Activated B cell treated with CpG ODN at 0.5 μM for 24 hours (primary cell): ENCODE measurements at regions of chr16 and their contacts with region 1.

Region 1: GRCh38 chr16:87636072-87636684 is 33.9 kb downstream of the JPH3 start:
- DNase-seq: peak; percentile 69
- ATAC-seq: peak; percentile 90
- H3K4me3 Mint-ChIP-seq: peak overlapping the region; percentile 84
- H3K27ac Mint-ChIP-seq: peak overlapping the region; percentile 69
- H3K4me1 Mint-ChIP-seq: peaks cover 24% of the 10 kb centered on the region
- H3K27me3 Mint-ChIP-seq: peaks cover 19% of the 10 kb centered on the region
- CTCF ChIP-seq: peak; percentile 4

Region 2: DNA sequence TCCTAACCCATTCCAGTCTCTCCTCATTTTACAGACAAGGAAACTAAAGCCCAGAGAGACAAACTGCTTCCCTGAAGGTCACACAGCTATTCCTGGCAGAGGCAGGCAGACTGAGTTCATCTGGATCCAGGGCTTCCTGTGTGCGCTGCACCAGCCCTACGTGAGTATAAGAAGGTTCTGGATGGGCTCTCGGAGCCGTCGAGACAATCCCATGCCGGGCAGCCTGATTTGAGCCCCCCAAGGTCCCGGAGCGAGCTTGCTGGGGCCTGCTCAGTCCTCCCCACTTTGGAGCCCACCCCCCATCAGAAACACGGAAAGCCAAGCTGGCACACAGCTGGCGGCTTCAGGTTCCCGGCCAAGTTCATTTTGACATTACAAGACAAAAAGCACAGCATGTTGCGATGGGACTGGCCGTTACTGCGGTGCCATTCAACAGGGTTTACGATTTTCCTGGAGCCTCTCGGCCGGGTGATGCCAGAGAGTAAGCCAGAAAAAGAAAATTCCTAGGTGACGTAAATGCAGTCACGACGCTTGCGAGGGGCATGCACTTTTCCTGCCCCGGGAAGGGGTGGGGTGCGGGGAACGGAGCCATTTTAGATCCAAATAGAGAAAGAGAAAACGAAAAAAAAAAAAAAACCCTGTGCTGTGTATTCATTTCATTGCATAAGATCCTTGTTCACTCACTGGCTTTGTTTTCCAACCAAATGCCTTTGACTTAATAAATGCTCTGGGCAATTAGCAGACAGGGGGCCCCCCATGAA is 1293.0 kb before region 1 on chr16:
- CTCF ChIA-PET with region 1: no interaction called
- POLR2A ChIA-PET with region 1: no interaction called
- intact Hi-C with region 1: no loop called
- DNase-seq: no peak
- ATAC-seq: no peak
- H3K4me3 Mint-ChIP-seq: no peak overlapping the region
- H3K27ac Mint-ChIP-seq: no peak overlapping the region
- H3K4me1 Mint-ChIP-seq: no peaks in the 10 kb centered on the region
- H3K27me3 Mint-ChIP-seq: peaks cover 65% of the 10 kb centered on the region
- CTCF ChIP-seq: no peak

Region 3: GRCh38 chr16:87028481-87029320 is 607.5 kb before region 1 on chr16:
- CTCF ChIA-PET with region 1: no interaction called
- POLR2A ChIA-PET with region 1: no interaction called
- intact Hi-C with region 1: no loop called
- DNase-seq: no peak
- ATAC-seq: no peak
- H3K4me3 Mint-ChIP-seq: no peak overlapping the region
- H3K27ac Mint-ChIP-seq: no peak overlapping the region
- H3K4me1 Mint-ChIP-seq: no peaks in the 10 kb centered on the region
- H3K27me3 Mint-ChIP-seq: peaks cover 6% of the 10 kb centered on the region
- CTCF ChIP-seq: no peak

Region 4: DNA sequence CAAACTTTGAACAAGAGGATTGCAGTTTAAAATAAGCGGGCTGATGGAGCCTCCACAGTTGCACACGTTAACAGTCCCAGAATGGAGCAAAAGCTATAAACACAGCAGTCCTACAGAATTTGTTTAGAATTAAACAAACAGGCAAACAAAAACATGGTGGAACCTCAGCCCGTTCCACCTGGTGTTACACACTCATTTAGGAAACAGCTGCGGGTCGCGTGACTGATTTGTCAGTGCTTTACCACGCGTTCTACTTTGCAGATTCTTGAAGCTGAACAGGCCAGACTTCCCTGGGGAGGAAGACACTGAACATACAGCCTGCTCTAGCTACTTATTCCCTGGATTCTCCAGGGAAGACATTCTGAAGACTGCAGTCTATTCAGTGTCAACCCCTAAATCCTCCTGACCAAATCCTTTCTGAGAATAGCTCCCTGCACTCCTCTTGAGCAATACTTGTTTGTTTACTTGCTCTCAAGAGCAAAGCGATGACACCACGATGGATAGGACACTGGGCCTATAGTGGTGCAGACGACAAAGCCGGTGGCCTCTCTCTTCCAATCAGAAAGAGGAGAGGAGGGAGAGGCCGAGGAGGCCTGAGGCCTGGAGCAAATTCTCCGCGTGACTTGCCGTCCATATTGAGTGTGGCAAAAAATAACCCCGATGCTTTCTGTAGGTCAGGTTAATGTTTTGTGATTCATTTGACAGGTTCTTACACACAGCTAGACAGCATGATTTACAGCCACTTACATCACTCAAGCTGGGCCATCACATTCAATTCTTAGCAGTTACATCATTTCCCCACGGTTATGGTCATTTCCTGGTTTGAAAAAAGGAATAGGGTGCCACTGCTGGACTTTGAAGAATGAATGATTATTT is 248.0 kb before region 1 on chr16:
- CTCF ChIA-PET with region 1: interaction called, 14 read pairs
- POLR2A ChIA-PET with region 1: interaction called, 5 read pairs
- intact Hi-C with region 1: loop called (anchors 1 kb)
- DNase-seq: peak; percentile 59
- ATAC-seq: peak; percentile 62
- H3K4me3 Mint-ChIP-seq: peak overlapping the region; percentile 70
- H3K27ac Mint-ChIP-seq: peak overlapping the region; percentile 98
- H3K4me1 Mint-ChIP-seq: peaks cover 52% of the 10 kb centered on the region
- H3K27me3 Mint-ChIP-seq: peaks cover 2% of the 10 kb centered on the region
- CTCF ChIP-seq: no peak

Region 5: GRCh38 chr16:87461466-87461991 is 174.6 kb before region 1 on chr16:
- CTCF ChIA-PET with region 1: interaction called, 11 read pairs
- POLR2A ChIA-PET with region 1: no interaction called
- intact Hi-C with region 1: no loop called
- DNase-seq: no peak
- ATAC-seq: peak; percentile 36
- H3K4me3 Mint-ChIP-seq: no peak overlapping the region
- H3K27ac Mint-ChIP-seq: no peak overlapping the region
- H3K4me1 Mint-ChIP-seq: peaks cover 23% of the 10 kb centered on the region
- H3K27me3 Mint-ChIP-seq: peaks cover 2% of the 10 kb centered on the region
- CTCF ChIP-seq: no peak

Region 6: DNA sequence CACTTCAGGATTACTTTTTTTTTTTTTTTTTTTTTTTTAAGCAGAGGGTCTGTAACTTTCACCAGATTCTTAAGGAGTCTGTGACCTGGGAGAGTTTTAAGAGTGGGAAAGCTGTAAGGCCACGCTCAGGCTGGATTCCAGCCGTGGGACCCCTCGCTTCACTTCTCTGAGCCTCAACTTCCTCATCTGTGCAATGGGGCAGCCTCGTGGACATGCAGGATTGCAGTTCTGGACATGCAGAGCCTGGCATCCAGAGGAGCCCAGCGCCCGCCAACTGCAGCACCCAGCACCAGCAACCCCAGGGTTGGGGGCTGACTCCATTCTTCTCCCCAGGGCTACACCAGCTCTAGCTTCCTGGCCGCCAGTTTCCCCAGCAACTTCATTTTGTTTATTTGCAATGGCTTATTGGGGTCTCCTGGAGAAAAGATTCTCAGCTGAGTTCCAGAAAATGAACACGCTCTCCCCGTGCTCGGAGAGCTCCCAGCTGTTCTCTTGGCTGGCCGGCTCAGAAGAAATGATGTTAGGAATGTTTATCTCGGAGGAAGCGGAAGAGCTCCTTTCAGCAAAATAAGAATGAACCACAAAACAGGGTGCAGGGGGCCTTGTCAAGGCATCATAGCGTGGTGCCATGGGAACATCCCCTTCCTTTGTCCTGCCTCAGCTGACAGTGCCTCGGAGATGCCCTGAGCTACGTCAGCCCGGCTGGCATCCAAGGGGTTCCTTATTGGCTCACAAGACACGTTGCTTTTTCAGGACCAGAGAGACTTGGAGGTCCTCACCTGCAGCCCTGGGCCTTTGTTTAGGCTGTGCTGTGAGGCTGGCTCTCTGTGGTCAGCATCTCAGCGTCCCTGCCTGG is 120.5 kb before region 1 on chr16:
- CTCF ChIA-PET with region 1: no interaction called
- POLR2A ChIA-PET with region 1: no interaction called
- intact Hi-C with region 1: no loop called
- DNase-seq: no peak
- ATAC-seq: no peak
- H3K4me3 Mint-ChIP-seq: no peak overlapping the region
- H3K27ac Mint-ChIP-seq: no peak overlapping the region
- H3K4me1 Mint-ChIP-seq: no peaks in the 10 kb centered on the region
- H3K27me3 Mint-ChIP-seq: peaks cover 39% of the 10 kb centered on the region
- CTCF ChIP-seq: no peak

Region 7: DNA sequence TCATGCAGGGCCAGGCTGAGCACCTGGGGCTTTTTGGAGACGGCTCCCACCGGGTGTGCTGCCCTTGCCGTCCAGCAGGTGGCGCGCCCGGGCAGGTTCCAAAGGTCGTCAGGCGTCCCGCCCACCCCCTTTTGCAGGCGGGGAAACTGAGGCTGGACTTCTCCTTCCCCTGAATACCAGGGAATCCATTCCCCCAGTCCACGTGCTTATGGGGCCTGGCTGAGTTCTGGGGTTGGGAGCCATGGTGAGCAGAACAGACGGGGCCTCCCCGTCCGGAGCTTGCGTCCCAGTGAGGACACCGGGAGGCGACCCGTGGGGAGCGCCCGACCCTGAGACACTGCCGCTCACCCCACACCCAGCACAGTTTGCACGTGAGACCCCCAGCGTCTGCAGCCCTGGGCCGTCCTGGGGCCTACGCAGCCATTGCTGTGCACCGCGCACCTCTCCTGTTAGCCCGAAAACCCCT is 85.6 kb before region 1 on chr16:
- CTCF ChIA-PET with region 1: interaction called, 12 read pairs
- POLR2A ChIA-PET with region 1: no interaction called
- intact Hi-C with region 1: loop called (anchors 1 kb)
- DNase-seq: peak; percentile 56
- ATAC-seq: no peak
- H3K4me3 Mint-ChIP-seq: no peak overlapping the region
- H3K27ac Mint-ChIP-seq: no peak overlapping the region
- H3K4me1 Mint-ChIP-seq: no peaks in the 10 kb centered on the region
- H3K27me3 Mint-ChIP-seq: peaks cover 23% of the 10 kb centered on the region
- CTCF ChIP-seq: peak; percentile 20

Region 8: DNA sequence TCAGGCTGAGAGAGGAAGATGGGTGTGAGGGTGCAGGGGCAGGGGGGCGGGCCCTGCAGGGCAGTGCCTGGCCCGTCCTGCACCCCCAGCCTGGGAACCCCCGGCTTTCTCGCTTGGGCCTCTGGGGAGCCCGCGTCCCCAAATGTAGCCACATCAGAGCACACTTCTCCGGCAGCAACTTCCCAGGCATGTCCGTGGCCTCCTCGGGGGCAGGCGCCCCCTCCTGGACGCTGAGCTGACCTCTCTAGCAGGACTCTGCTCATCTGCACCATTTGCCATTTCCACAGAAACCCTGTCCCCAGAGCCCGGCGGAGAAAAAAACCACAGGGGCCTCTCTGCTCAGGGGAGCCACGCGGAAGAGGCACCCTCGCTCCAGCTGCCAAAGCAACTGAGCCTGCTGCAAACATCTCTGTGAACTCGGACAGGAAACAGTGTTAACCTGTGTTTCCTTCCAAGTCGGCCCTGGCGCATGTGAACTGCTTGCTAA is 66.2 kb after region 1 on chr16:
- CTCF ChIA-PET with region 1: interaction called, 10 read pairs
- POLR2A ChIA-PET with region 1: interaction called, 7 read pairs
- intact Hi-C with region 1: loop called (anchors 1 kb)
- DNase-seq: peak; percentile 57
- ATAC-seq: peak; percentile 46
- H3K4me3 Mint-ChIP-seq: peak overlapping the region; percentile 57
- H3K27ac Mint-ChIP-seq: peak overlapping the region; percentile 82
- H3K4me1 Mint-ChIP-seq: peaks cover 58% of the 10 kb centered on the region
- H3K27me3 Mint-ChIP-seq: no peaks in the 10 kb centered on the region
- CTCF ChIP-seq: no peak

Region 9: DNA sequence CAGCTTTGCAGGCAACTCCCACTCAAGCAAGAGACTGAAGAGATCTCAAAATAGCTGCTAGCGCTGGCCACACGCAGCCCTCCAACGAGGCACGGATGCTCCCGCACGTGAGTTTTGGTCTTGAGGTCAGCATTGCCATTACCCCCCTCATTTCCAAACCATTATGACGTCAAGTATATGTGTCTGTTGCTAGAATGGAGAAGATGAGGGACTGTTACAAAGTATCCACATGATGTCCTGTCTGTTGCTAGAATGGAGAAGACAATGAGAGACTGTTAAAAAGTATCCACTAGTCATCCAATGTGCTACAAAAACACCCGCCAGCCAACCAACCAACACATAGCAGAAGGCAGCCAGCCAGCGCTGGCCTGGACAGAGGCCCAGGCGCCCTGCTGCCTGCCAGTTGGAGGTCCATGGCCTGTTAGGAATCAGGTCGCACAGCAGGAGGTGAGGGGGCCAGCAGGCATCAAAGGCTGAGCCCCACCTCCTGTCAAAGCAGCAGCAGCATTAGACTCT is 104.8 kb after region 1 on chr16:
- CTCF ChIA-PET with region 1: no interaction called
- POLR2A ChIA-PET with region 1: no interaction called
- intact Hi-C with region 1: no loop called
- DNase-seq: no peak
- ATAC-seq: no peak
- H3K4me3 Mint-ChIP-seq: no peak overlapping the region
- H3K27ac Mint-ChIP-seq: no peak overlapping the region
- H3K4me1 Mint-ChIP-seq: no peaks in the 10 kb centered on the region
- H3K27me3 Mint-ChIP-seq: no peaks in the 10 kb centered on the region
- CTCF ChIP-seq: no peak